ENCODE measurements at regions of chr1 and their contacts with region 1.

Region 1: GRCh38 chr1:117555806-117556205 is 50.0 kb upstream of the TENT5C start:
- ATAC-seq: peak in 1 of 8 experiments; percentile 44
- H3K4me3 ChIP-seq: no peak overlapping the region
- H3K27ac ChIP-seq: no peak overlapping the region
- H3K4me1 ChIP-seq: no peaks in the 10 kb centered on the region

Region 2: GRCh38 chr1:117290890-117291289 is 264.9 kb before region 1 on chr1:
- in situ Hi-C with region 1: no loop called
- ATAC-seq: peak in 1 of 8 experiments; percentile 26
- H3K4me3 ChIP-seq: no peak overlapping the region
- H3K27ac ChIP-seq: no peak overlapping the region
- H3K4me1 ChIP-seq: peaks cover 6% of the 10 kb centered on the region in 2 donors

Region 3: DNA sequence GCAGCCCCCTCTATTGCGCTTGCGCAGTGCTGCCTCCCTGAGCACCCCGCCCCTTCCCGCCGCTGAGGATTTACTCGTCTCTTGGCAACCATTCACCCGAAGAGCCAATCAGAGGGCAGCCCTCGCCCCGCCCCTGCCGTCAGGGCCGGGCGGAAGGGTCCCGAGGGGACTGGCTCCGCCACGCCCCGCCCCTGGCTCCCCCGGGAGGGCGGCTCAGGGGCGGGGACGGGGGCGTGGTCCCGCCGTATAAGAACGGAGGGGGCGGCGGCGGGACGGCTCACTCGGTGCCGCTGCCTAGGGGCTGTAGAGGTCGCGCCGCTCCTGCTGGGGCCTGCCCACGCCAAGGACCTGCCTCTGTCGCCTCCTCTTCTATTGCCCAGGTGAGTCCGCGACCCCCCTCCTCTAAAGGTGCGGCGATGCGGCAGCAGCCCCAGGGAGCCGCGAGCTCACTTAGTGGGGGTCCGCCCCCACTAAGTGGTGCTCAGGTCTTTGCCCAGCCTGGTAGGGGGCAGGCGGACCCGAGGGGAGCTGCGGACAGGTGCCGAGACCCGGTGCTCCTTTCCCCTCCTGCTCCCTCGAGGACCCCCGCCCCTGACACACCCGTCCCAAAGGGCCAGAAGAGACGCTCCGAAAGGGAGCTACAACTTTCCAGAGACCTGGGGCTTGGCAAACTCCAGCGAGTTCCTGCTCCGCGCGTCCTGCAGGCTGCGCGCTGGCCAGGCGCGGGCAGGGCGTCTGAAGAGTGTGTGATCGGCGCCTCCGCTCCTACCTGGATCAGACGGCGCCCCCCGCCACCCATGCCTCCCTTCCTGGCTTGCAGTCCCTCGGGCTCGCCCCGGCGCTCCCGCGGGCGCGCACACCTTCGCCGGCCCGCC is 50.2 kb after region 1 on chr1 and contains the start of gene TENT5C:
- in situ Hi-C with region 1: loop called in 1 of 9 experiments (anchors 10 kb)
- ATAC-seq: peak; percentile 84 to 97 (median 94)
- H3K4me3 ChIP-seq: peak within 1 kb of the TSS; percentile 39 to 60 (median 47)
- H3K27ac ChIP-seq: no peak within 1 kb of the TSS
- H3K4me1 ChIP-seq: no peaks in the 10 kb centered on the region
- total RNA-seq, gene TENT5C: 0.05 to 1.4 (median 0.56) TPM

Region 4: DNA sequence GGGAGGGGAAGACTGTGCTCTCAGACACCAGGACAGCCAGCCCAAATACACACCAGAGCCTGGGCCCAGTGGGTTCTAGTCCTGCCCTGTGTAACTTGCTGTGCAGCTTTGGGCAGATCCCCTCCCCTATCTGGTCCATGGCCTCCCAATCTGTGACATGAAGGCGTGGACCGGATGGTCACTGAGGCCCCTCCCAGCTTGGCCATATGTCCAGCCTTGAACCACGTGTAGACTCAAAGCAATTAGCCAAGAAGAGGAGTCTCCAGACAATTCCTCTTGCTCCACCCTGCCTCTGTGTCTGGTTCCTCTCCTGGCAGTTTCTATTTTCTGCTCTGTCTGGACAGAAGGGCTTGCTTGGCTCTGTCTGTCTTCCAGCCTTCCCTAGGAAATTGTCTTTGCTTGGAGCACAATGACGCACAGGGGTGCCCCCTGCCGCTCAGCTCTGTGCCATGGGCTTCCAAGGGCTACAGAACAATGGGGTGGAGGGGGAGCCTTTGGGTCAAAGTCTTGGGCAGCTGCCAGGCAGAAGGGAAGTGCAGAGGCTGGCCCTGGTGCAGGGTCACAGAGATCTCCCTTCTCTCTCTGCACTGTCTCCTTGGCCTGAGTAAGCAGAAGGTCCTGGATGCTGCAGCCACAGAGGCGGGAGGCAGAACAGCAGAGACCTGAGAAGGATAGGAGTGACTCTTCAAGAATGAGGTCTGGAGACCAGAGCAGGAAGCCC is 116.1 kb after region 1 on chr1:
- in situ Hi-C with region 1: no loop called
- ATAC-seq: peak in 4 of 8 experiments; percentile 75 to 92 (median 84)
- H3K4me3 ChIP-seq: no peak overlapping the region
- H3K27ac ChIP-seq: no peak overlapping the region
- H3K4me1 ChIP-seq: no peaks in the 10 kb centered on the region

Measured in motor neuron (in vitro differentiated cells).